OCI-LY7 (cell line): ENCODE measurements at regions of chr7 and their contacts with region 1.

Region 1: DNA sequence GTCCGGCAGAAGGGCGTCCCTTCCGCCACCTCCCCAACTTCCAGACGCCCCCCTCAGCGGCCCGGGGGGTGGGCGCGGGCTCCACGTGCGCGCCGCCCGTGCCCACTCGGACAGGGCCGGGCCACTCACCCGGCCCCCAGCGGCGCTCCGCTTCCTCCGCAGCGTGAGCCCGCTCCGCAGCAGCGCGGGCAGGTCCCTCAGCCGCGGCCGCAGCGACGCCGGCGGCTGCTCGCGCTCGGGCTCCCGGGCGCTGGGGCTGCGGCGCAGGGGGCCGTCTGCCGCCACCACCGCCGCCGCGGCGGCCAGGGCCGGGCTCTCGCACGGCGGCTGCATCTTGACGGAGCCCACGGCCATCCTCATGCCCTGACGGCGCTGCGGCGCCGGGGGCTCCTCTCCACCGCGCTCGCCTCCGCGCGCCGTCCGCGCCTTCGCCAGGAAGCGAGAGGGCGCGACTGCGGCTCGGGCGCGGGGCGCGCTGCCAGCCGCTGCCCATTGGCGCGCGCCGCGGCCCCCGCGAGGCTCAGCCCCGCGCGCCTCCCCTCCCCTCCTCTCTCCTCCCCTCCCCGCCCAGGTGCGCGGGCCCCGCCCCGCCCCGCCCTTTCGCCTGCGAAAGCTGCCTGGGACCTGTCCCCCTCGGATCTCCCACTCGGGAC is at the start of gene RAPGEF5:
- DNase-seq: peak; percentile 83
- H3K4me3 ChIP-seq: peak within 1 kb of the TSS; percentile 82
- H3K27ac ChIP-seq: peak within 1 kb of the TSS; percentile 72
- H3K4me1 ChIP-seq: peaks cover 53% of the 10 kb centered on the region
- CTCF ChIP-seq: no peak
- total RNA-seq, gene RAPGEF5: 114 and 136 TPM in 2 replicates

Region 2: DNA sequence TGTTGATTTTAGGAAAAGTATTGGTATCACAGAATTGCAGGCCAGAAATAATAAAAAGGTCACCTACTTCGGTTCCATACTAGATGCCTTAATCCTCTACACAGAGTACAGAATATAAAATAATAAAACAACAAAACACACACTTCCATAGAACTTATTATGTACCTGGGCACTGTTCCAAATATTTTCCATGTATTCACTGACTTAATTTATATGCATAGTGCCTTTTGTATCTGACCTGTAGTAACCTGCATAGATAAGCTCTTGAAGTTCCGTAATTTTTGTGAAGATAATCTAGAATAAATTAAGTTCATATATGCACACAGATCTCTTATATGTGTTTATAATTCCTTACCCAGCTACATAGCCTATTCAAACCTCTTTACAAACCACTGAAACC is 78.2 kb before region 1 on chr7:
- CTCF ChIA-PET with region 1: no interaction called
- POLR2A ChIA-PET with region 1: no interaction called
- intact Hi-C with region 1: no loop called
- DNase-seq: no peak
- H3K4me3 ChIP-seq: no peak overlapping the region
- H3K27ac ChIP-seq: no peak overlapping the region
- H3K4me1 ChIP-seq: no peaks in the 10 kb centered on the region
- CTCF ChIP-seq: no peak

Region 3: DNA sequence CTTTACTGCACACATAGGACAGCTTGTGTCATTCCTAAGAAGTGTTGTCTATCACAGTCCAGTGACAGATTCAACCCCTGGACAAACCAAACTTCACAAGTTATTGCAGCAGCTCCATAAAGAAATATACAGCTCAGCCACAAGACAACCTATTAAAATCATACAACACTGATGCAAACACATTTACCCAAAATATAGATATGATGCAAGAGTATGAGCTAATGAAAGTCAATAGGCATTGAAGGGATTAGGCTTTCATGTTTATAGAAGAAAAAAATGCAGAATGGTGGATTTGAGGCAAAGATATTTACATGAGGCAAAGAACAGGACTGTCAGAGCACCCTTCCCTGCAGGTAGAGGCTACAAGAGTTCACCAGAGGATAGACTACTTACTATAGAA is 15.1 kb after region 1 on chr7:
- CTCF ChIA-PET with region 1: no interaction called
- POLR2A ChIA-PET with region 1: interaction called, 47 read pairs
- intact Hi-C with region 1: no loop called
- DNase-seq: no peak
- H3K4me3 ChIP-seq: no peak overlapping the region
- H3K27ac ChIP-seq: no peak overlapping the region
- H3K4me1 ChIP-seq: peaks cover 30% of the 10 kb centered on the region
- CTCF ChIP-seq: no peak

Region 4: DNA sequence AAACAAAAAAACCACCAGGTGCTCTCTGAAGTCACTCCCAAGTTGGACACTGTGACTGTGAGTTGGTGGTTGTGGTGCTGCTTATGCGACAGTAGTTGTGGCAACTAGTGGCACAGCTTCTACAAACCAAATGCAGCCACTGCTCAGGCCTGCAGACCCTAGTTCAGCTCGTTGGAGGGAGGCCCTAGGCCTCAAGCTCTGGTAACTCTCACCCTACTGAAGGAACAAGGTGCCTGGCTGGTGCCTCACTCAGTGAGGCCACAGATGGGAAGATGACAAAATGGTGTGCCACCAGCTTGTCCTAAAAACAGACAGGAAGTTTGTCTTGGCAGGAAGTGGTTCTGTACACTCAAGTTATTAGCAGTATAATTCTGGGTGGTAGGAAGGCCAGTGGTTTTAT is 45.4 kb after region 1 on chr7:
- CTCF ChIA-PET with region 1: no interaction called
- POLR2A ChIA-PET with region 1: interaction called, 11 read pairs
- intact Hi-C with region 1: no loop called
- DNase-seq: peak; percentile 72
- H3K4me3 ChIP-seq: peak overlapping the region; percentile 24
- H3K27ac ChIP-seq: peak overlapping the region; percentile 75
- H3K4me1 ChIP-seq: peaks cover 33% of the 10 kb centered on the region
- CTCF ChIP-seq: no peak

Region 5: DNA sequence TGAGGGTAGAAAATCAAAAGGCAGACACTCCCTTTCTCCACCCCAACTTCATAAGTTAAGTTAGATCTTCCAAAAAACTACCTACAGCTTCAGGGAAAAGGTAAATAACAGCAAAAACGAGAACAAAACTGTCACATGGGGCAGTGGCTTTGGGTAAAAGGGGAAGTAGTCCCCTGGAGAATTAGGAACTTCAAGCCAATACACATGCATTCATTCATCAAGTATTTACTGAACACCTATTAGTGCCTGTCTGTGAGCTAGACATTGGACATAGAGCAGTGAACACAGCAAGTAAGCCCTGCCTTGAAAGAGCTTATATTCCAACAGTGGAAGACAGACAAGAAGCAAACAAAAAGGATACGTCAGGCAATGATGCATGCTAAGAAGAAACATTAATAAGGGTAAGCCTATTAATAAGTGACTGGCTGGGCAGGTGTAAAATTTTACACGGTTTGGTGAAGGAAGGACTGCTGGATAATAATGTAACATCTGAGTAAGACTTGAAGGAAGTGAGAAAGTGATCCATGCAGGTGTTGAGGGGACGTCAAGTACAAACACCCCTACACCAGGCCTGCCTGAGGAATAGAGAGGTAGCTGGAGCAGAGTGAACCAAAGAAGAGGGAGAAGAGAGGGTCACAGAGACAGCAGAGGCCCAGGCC is 69.8 kb after region 1 on chr7:
- CTCF ChIA-PET with region 1: no interaction called
- POLR2A ChIA-PET with region 1: interaction called, 23 read pairs
- intact Hi-C with region 1: no loop called
- DNase-seq: peak; percentile 50
- H3K4me3 ChIP-seq: no peak overlapping the region
- H3K27ac ChIP-seq: peak overlapping the region; percentile 74
- H3K4me1 ChIP-seq: peaks cover 96% of the 10 kb centered on the region
- CTCF ChIP-seq: no peak

Region 6: DNA sequence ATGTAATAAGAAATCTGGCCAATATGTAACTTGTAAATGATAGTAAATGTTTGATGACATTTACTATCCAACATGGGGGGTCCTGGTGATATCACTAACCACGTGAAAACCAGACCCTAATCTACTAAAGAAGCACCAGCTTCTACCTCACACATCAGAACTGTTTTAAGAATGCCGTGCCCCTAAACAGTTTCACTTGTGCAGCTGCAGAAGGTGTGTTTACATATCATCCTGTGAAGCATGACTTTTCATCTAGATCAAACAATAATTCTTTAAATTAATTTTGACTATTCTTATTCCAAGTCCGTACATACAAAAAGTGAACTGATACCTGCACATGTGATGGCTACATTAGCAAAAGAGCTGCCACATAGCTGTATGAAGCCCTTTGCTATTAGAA is 82.2 kb after region 1 on chr7:
- CTCF ChIA-PET with region 1: interaction called, 4 read pairs
- POLR2A ChIA-PET with region 1: interaction called, 26 read pairs
- intact Hi-C with region 1: loop called (anchors 1 kb)
- DNase-seq: peak; percentile 96
- H3K4me3 ChIP-seq: peak overlapping the region; percentile 39
- H3K27ac ChIP-seq: peak overlapping the region; percentile 99
- H3K4me1 ChIP-seq: peaks cover 98% of the 10 kb centered on the region
- CTCF ChIP-seq: no peak

Region 7: GRCh38 chr7:23013715-23014649 is 657.2 kb after region 1 on chr7 and contains the start of gene HYCC1:
- CTCF ChIA-PET with region 1: no interaction called
- POLR2A ChIA-PET with region 1: interaction called, 6 read pairs
- intact Hi-C with region 1: loop called (anchors 10 kb)
- DNase-seq: peak; percentile 99
- H3K4me3 ChIP-seq: peak within 1 kb of the TSS; percentile 98
- H3K27ac ChIP-seq: peak within 1 kb of the TSS; percentile 84
- H3K4me1 ChIP-seq: peaks cover 75% of the 10 kb centered on the region
- CTCF ChIP-seq: peak; percentile 79
- total RNA-seq, gene HYCC1: 43.3 and 69.9 TPM in 2 replicates